ENCODE measurements at regions of chr6 and their contacts with region 1.

Region 1: DNA sequence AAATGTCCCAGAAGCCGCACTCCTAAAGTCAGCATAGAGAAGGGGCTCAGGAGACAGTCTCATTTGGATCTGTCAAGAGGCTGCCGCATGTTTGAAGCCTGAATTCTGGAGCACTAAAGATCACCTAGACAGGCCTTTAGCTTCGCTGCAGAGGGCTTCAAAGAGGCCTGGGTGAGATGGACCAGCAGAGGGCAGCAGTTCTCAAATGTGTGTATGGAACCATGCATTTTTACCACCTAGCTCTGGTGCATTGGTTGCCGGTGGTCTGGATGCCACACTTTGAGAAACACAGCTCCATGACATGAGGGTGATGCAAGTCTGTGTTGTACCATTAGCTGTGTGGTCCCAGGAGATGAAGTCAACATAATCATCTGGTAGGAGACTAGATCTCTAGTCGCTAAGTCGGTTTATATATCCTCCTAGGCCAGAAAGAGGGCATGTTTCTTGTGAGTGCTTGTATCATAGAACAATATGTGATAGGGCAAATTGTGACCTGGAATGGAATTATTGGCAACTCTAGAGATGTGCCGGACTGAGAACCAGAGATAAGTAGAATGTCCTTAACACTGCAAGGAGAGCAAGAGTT is 64.8 kb downstream of the KIAA0319 start:
- DNase-seq: peak; percentile 80
- H3K4me3 ChIP-seq: no peak overlapping the region
- H3K27ac ChIP-seq: no peak overlapping the region
- H3K4me1 ChIP-seq: peaks cover 17% of the 10 kb centered on the region
- H3K27me3 ChIP-seq: peaks cover 20% of the 10 kb centered on the region
- CTCF ChIP-seq: peak; percentile 90

Region 2: GRCh38 chr6:24689964-24690363 is 108.8 kb after region 1 on chr6:
- CTCF ChIA-PET with region 1: interaction called, 6 read pairs
- POLR2A ChIA-PET with region 1: no interaction called
- intact Hi-C with region 1: loop called (anchors 1 kb)
- DNase-seq: no peak
- H3K4me3 ChIP-seq: no peak overlapping the region
- H3K27ac ChIP-seq: no peak overlapping the region
- H3K4me1 ChIP-seq: no peaks in the 10 kb centered on the region
- H3K27me3 ChIP-seq: no peaks in the 10 kb centered on the region
- CTCF ChIP-seq: no peak

Region 3: DNA sequence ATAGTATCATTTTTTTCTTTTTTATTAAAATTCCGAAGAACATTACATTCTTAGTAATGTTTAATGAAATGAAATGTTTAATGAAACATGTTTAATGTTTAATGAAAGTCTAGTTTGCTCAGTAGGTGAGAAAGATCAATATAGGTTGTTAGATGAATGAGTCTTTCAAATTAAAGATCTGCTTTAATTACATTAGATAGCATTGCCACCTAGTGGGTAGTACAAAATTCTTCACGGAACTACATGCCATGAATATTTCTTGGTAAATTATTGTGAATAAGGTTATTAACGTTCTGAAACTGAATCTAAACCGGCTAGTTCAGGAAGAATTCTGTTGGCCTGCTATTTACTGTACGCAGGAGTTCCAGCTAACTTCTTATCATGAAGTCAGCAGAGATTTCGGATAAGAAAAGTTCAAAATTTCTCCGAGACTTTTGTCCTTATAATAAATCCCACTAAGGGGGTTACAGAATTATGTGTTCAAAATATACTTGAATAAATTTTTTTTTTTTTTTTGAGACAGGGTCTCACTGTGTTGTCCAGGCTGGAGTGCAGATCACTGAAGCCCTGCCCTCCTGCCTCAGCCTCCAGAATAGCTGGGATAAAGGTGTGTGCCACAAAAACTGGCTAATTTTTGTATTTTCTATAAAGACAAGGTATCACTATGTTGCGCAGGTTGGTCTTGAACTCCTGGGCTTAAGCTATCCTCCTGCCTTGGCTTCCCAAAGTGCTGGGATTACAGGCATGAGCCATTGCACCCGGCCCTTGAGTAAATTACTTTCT is 185.7 kb after region 1 on chr6:
- CTCF ChIA-PET with region 1: interaction called, 9 read pairs
- POLR2A ChIA-PET with region 1: no interaction called
- intact Hi-C with region 1: loop called (anchors 2 kb)
- DNase-seq: peak; percentile 42
- H3K4me3 ChIP-seq: no peak overlapping the region
- H3K27ac ChIP-seq: no peak overlapping the region
- H3K4me1 ChIP-seq: no peaks in the 10 kb centered on the region
- H3K27me3 ChIP-seq: no peaks in the 10 kb centered on the region
- CTCF ChIP-seq: peak; percentile 60

Measured in A673 (cell line).